ENCODE measurements at regions of chr1 and their contacts with region 1.

Region 1: DNA sequence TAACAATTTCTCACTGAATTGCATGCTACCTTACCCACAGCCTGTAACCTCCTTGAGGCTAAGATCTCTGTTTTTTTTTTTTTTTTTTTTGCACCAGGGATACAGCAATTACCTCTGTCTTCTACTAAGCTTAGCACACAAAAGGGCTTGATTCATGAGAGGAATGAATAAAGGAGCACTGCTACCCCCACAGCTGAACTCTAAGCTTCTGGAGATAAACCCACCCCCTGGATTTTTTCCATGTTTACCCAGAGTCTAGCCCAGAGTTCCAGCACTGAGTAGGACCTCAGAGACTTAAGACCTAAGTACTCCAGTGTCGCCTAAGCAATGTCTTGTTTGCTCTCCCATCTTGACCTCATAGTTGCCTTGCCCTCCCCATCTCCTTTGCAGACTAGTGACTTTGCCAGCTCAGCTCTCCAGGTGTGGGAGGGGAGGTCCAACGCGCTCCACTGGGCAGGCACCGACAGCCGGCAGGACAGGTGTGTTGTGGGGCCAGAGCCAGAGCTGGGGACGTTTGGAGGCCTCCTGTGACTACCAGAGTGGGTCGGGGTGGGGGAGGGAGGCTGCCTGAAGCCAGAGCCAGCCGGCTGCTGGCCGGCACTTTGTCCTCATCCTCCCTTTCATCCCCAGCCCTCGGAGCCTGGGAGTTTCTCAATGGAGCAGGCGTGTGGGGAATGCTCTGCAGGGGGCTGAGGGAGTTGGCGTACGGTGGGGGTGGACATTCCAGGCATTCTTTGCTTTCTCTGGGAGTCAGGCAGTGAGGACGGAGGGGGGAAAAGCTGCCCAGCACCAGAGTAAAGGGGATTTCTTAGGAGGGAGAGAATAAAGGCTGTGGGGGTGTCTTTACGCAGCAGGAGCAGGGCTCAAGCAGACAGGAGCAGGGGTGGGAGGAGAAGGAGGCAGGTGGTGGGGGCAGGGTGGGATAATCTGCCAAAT is 20.4 kb downstream of the NUAK2 start:
- H3K4me3 ChIP-seq: peak overlapping the region; percentile 21
- H3K27ac ChIP-seq: peak overlapping the region; percentile 22; the same call in 1 of the 2 replicates
- H3K4me1 ChIP-seq: peaks cover 7% of the 10 kb centered on the region
- CTCF ChIP-seq: no peak

Region 2: DNA sequence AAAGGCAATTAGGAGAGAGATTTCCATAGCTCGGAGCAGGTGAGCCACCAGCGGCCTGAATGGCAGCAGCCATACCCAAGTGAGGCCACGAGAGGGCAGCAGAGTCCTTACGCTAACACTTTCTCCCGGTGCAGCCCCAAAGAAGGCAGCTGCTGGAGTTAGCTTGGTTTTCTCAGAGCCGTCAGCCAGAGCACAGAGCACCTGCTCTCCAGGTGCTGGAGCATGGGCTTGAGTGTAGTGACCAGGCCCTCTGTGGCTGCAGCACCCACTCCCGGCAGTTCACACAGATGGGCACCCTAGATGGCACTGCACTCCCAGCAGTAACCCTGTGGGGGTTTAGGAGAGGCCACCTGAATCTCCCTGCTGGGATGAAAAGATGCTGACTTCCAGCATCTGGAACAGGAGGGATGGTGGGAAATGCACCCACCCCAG is 27.6 kb before region 1 on chr1:
- CTCF ChIA-PET with region 1: interaction called, 17 read pairs
- POLR2A ChIA-PET with region 1: interaction called, 10 read pairs
- H3K4me3 ChIP-seq: no peak overlapping the region
- H3K27ac ChIP-seq: no peak overlapping the region
- H3K4me1 ChIP-seq: no peaks in the 10 kb centered on the region
- CTCF ChIP-seq: peak; percentile 93

Region 3: DNA sequence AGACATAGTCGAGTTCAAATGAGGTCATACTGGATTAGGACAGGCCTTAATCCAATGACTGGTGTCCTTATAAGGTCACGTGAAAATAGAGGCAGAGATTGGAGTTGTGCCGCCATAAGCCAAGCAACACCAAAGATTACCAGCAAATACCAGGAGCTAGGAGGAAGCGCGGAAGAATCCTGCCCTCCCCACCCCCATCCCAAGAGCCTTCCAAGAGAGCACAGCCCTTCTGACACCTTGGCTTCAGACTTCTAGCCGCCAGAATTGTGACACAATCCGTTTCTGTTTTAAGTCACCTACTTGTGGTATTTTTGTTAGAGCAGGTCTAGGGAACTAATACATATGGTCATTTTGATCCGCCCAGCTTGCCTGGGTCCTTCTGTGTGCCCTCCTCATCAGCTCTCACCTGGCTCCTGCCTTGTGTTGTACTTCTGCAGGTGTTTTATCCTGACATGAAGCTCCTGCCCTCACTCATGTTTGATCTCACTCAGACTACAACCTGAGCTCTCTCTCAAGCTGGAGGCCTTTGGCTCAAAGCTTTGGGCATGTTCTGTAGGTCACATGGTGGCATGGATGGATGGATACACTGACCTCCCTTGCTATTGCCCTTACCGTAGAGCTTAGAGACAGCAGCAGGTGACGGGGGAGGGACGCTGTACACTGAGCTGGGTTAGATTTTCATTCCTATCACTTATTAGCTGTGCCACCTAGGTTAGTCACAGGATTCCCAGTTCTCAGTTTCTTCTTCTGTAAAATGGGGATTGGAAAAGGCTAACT is 31.0 kb after region 1 on chr1:
- CTCF ChIA-PET with region 1: no interaction called
- POLR2A ChIA-PET with region 1: no interaction called
- H3K4me3 ChIP-seq: no peak overlapping the region
- H3K27ac ChIP-seq: no peak overlapping the region
- H3K4me1 ChIP-seq: 0 out of 2 replicates have a peak, but pooled peaks cover 2% of the 10 kb centered on the region
- CTCF ChIP-seq: no peak

Measured in HEK293 (cell line).